ENCODE measurements at regions of chr19 and their contacts with region 1.

Region 1: GRCh38 chr19:10238172-10238783 is 7.1 kb upstream of the S1PR2 start:
- DNase-seq: peak; percentile 56
- H3K4me3 ChIP-seq: peak overlapping the region; percentile 65
- H3K27ac ChIP-seq: peak overlapping the region; percentile 95
- H3K4me1 ChIP-seq: peaks cover 96% of the 10 kb centered on the region
- CTCF ChIP-seq: no peak

Region 2: DNA sequence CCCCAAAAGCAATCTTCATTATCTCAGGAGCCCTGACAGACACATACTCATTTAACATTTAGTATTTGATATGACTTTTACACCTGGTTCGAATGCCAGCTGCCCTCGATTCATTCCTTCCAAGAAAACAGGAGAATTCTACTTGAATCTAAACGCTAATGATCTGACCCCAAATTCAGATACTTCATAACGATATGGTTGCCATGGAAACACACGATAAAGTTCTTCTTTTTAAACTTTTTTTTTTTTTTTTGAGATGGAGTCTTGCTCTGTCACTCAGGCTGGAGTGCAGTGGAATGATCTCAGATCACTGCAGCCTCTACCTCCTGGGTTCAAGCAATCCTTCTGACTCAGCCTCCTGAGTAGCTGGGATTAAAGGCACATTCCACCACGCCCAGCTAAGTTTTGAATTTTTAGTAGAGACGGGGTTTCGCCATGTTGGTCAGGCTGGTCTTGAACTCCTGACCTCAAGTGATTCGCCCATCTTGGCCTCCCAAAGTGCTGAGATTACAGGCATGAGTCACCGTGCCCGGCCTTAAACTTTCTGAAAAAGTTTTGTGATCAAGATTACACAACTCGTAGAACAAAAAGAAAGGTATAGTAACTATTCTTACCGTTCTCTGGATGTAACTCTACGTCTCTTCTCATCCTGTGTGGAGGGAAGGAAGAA is 64.9 kb before region 1 on chr19:
- CTCF ChIA-PET with region 1: no interaction called
- POLR2A ChIA-PET with region 1: no interaction called
- intact Hi-C with region 1: loop called (anchors 5 kb)
- DNase-seq: no peak
- H3K4me3 ChIP-seq: no peak overlapping the region
- H3K27ac ChIP-seq: no peak overlapping the region
- H3K4me1 ChIP-seq: peaks cover 32% of the 10 kb centered on the region
- CTCF ChIP-seq: no peak

Region 3: DNA sequence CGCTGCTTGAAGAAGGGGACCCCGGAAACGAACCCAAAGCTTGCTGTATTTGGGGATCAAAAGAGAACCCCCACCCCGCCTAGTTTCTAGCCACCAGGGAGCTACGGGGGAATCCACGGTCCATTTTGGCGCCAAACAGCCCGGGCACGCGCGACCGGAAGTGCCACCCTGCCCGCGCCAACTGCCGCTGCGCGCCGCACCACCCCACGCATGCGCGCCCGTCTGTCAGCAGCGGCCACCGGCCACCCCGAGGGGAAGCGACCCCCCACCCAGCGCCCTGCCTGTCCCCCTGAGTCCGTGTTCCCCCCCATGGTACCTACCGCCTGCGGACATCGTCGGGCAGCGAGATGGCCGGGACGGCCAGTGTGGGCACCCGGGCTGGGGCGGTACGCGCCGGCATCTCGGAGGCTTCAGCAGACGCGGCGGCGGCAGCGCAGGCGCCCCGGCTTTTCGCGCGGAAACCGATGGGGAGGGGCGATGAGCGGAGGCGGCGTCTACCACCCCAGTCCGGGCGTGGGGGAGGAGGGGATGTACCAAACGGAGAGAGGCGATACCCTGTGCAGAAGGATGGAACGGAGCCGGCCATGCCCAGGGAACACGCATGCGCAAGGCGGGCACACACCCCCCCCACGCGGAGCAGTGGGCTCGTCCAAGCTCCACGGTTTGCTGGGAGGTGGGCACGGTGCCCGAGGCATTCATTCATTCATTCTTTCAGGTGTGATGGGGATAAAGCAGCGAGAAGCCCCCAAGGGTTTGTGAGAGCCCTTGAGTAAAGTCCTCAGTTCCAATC is 43.6 kb before region 1 on chr19 and contains the start of gene DNMT1:
- CTCF ChIA-PET with region 1: no interaction called
- POLR2A ChIA-PET with region 1: interaction called, 7 read pairs
- intact Hi-C with region 1: loop called (anchors 5 kb)
- DNase-seq: peak; percentile 98
- H3K4me3 ChIP-seq: peak within 1 kb of the TSS; percentile 92
- H3K27ac ChIP-seq: peak within 1 kb of the TSS; percentile 78
- H3K4me1 ChIP-seq: peaks cover 80% of the 10 kb centered on the region
- CTCF ChIP-seq: no peak
- total RNA-seq, gene DNMT1: 329 and 365 TPM in 2 replicates

Region 4: DNA sequence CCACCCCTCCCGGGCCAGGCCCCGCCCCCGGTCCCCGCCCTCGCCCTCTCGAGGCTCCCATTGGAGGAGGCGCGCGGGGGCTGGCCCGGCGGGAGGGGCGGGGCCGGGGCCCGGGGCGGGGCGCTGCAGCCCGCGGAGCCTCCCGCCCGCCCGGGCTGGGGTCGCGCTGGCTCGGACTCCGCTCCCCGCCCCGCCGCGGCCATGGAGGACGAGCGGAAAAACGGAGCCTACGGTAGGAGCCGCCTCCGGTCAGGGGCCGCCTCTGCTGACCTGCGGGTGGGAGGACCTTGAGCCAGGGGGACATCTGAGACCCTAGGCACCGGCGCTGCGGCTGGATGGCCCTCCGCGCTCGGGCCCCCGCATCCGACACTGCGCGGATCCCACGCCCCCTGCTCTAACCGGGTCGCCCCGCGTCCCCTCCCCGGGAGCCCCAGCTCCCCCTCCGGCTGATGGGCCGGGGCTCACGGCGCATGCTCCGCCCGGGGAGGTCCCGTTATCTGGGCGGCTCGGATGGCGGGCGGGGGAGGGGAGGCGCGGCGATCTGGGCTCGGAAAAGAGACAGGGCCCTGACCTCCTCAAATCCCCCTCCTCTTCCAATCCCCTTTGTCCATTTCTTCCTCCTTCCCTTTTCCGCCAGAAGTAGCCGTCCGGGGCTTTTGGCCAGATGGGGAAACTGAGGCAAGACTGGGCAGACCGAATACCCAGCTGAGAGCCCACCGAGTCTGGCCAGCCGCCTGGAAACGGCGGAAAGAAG is 364.2 kb after region 1 on chr19:
- CTCF ChIA-PET with region 1: no interaction called
- POLR2A ChIA-PET with region 1: no interaction called
- intact Hi-C with region 1: loop called (anchors 5 kb)
- DNase-seq: peak; percentile 90
- H3K4me3 ChIP-seq: peak overlapping the region; percentile 93
- H3K27ac ChIP-seq: peak overlapping the region; percentile 93
- H3K4me1 ChIP-seq: peaks cover 54% of the 10 kb centered on the region
- CTCF ChIP-seq: no peak

Measured in OCI-LY7 (cell line).